Common myeloid progenitor, CD34-positive (primary cell): ENCODE measurements at regions of chr15 and their contacts with region 1.

Region 1: GRCh38 chr15:89740137-89740536 is 10.9 kb downstream of the MESP1 start:
- DNase-seq: peak; percentile 76 to 85 (median 78)
- H3K4me3 ChIP-seq: peak overlapping the region in 2 of 7 experiments; percentile 20 to 66
- H3K27ac ChIP-seq: no peak overlapping the region
- H3K4me1 ChIP-seq: peaks cover 0 to 2% (median 0%) of the 10 kb centered on the region in 4 experiments
- H3K27me3 ChIP-seq: no peaks in the 10 kb centered on the region

Region 2: DNA sequence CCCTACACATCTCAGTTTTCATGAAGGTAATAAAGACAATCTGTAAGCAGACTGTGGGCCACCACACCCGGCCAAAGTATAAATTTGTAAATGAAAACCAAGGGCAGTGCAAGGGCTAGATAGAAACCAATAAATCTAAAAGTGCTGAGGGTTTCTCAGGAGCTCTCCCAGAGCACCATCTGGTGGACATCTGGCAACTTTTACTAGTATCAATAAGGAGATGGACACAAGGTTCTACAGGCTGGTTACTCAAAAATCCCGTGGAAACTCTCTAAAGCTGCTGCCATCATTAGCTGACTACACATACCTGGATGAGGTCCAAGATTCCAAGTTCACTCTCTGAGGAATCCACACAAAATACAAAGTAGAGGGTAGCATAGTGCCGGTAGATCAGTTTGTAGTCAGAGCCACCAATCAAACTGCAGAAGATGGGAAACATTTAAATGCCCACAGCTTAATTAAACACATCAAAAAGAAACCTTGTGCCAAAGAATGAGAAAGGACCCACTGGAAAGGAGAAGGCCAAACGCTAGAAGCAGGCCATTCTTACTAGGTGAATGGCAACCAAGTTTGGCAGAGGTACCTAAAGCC is 148.2 kb after region 1 on chr15:
- CTCF ChIA-PET with region 1: interaction called, 36 read pairs
- POLR2A ChIA-PET with region 1: no interaction called
- DNase-seq: peak; percentile 46 to 72 (median 58)
- H3K4me3 ChIP-seq: no peak overlapping the region
- H3K27ac ChIP-seq: no peak overlapping the region
- H3K4me1 ChIP-seq: peaks cover 3 to 8% (median 6%) of the 10 kb centered on the region in 4 experiments
- H3K27me3 ChIP-seq: no peaks in the 10 kb centered on the region